Activated B cell treated with CpG ODN at 0.5 μM for 24 hours (primary cell): ENCODE measurements at regions of chr18 and their contacts with region 1.

Region 1: GRCh38 chr18:63439334-63439733 is 17.1 kb upstream of the VPS4B start:
- DNase-seq: peak; percentile 16
- ATAC-seq: peak; percentile 79
- H3K4me3 Mint-ChIP-seq: no peak overlapping the region
- H3K27ac Mint-ChIP-seq: no peak overlapping the region
- H3K4me1 Mint-ChIP-seq: peaks cover 7% of the 10 kb centered on the region
- H3K27me3 Mint-ChIP-seq: peaks cover 7% of the 10 kb centered on the region
- CTCF ChIP-seq: peak; percentile 94

Region 2: DNA sequence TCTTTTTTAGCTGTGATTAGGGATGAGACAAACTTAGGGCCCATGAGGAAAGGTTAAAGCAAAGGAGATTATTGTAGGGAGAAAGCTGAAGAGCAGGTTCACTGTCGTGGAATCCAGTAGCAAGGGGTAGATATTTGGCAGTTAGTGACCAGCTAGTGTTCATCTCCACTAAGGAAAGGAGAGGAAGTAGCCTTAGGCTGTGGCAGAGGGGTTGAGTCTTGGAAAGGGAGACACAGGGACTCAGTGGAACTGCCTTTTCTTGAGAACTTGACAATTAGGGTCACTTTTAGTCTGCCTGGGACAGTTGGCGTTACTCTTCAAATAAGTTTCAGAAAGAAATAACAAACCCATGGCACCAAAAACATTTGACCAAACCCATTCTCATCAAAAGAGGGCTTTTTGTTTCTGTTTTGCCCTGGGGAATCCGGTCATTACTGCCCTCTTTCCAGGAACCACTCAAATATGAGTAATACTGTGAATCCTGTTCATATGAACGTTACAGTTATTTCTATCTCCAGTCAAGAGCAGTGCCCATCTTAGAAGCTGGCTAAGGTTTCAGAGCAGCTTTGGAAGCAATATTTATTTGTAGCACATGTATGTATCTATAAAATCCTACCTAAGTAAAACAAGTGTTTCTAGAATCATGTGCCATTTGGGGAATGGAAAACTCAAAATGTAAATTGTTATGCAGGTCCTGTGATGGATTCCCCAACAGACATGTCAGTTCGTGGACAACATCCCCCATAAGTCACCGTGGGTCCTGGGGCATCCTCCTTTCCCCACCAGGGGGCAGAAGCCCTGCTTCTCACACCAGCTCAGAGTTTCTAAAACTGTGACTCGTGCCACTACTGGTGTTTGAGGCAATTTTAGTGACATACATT is 801.3 kb before region 1 on chr18:
- CTCF ChIA-PET with region 1: interaction called, 13 read pairs
- POLR2A ChIA-PET with region 1: no interaction called
- intact Hi-C with region 1: loop called (anchors 1 kb)
- DNase-seq: peak; percentile 20
- ATAC-seq: peak; percentile 50
- H3K4me3 Mint-ChIP-seq: no peak overlapping the region
- H3K27ac Mint-ChIP-seq: no peak overlapping the region
- H3K4me1 Mint-ChIP-seq: no peaks in the 10 kb centered on the region
- H3K27me3 Mint-ChIP-seq: peaks cover 7% of the 10 kb centered on the region
- CTCF ChIP-seq: no peak

Region 3: GRCh38 chr18:63016270-63016669 is 423.1 kb before region 1 on chr18:
- CTCF ChIA-PET with region 1: interaction called, 98 read pairs
- POLR2A ChIA-PET with region 1: interaction called, 7 read pairs
- intact Hi-C with region 1: loop called (anchors 1 kb)
- DNase-seq: no peak
- ATAC-seq: peak; percentile 75
- H3K4me3 Mint-ChIP-seq: no peak overlapping the region
- H3K27ac Mint-ChIP-seq: no peak overlapping the region
- H3K4me1 Mint-ChIP-seq: no peaks in the 10 kb centered on the region
- H3K27me3 Mint-ChIP-seq: peaks cover 13% of the 10 kb centered on the region
- CTCF ChIP-seq: no peak

Region 4: DNA sequence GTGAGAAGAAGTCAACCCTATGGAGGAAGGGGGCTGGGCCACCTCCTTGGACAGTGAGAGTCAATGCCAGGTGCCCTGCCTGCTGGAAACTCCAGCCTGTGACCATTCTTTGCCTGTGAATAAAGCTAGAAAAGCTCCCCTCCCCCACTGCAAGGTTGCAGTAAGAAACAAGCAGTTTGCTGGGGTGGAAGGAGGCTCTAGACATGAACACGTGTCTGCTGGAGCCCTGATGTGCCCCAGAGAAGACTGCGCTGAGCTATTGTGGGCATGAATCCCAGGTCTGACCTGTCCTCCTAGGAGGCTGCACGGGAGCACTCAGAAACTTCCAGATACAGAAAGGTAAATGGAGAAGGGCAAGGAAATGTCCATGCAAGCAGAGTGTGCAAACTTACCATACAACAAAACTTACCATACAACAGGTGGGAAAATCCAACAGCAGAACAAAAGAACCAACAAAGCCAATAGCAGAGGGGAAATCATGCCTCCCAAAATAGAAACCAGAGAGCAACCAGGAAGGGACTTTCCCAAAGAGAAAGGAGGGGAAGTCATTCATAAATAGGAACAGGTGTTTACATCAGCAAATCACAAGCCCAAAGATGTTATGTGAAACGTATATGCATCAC is 398.4 kb before region 1 on chr18:
- CTCF ChIA-PET with region 1: no interaction called
- POLR2A ChIA-PET with region 1: no interaction called
- intact Hi-C with region 1: no loop called
- DNase-seq: no peak
- ATAC-seq: peak; percentile 69
- H3K4me3 Mint-ChIP-seq: peak overlapping the region; percentile 53
- H3K27ac Mint-ChIP-seq: peak overlapping the region; percentile 51
- H3K4me1 Mint-ChIP-seq: peaks cover 29% of the 10 kb centered on the region
- H3K27me3 Mint-ChIP-seq: no peaks in the 10 kb centered on the region
- CTCF ChIP-seq: no peak

Region 5: DNA sequence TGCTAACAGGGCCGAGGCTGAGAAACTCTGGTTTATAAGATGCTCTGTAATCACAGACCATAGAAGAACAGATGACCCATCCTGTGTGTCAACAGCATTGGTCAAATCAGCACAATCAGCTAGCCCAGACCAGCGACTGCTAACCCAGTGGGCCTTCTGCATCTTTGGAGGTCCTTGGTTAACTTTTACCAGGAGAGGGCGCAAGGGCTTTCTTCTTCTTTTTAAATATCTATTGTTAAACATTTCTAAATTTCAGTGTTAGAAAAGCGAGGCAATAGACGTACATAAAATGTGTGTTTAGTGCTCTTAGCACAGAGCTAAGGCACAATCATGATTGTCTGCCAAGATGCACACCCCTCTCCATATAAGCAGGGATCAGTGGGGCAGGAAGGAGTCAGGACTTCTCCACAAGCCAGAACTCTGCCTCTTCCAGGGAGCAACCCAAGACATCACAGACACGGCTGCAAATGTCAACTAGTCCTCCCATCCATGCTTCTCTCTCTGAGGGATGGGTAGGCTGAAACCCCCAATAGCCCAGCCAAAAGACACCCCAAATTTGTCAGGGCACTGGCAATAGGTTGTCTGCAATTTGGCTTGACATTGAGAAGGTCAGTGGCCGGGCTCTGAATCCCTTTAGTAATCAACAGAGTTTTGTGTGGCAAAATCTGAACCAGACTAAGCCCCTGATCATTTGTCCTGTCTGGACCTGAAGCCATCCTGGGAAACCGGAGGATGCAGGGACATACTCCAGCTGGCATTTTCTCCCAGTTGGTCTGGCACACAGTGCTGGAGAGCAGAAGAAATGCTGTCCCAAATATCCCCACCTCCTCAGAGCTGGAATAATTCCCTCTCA is 308.0 kb before region 1 on chr18:
- CTCF ChIA-PET with region 1: interaction called, 3 read pairs
- POLR2A ChIA-PET with region 1: no interaction called
- intact Hi-C with region 1: loop called (anchors 2 kb)
- DNase-seq: no peak
- ATAC-seq: peak; percentile 65
- H3K4me3 Mint-ChIP-seq: no peak overlapping the region
- H3K27ac Mint-ChIP-seq: peak overlapping the region; percentile 70
- H3K4me1 Mint-ChIP-seq: peaks cover 35% of the 10 kb centered on the region
- H3K27me3 Mint-ChIP-seq: no peaks in the 10 kb centered on the region
- CTCF ChIP-seq: no peak

Region 6: GRCh38 chr18:63395503-63395902 is 43.8 kb before region 1 on chr18:
- CTCF ChIA-PET with region 1: no interaction called
- POLR2A ChIA-PET with region 1: no interaction called
- intact Hi-C with region 1: loop called (anchors 5 kb)
- DNase-seq: no peak
- ATAC-seq: no peak
- H3K4me3 Mint-ChIP-seq: no peak overlapping the region
- H3K27ac Mint-ChIP-seq: no peak overlapping the region
- H3K4me1 Mint-ChIP-seq: peaks cover 3% of the 10 kb centered on the region
- H3K27me3 Mint-ChIP-seq: no peaks in the 10 kb centered on the region
- CTCF ChIP-seq: no peak